Gastrocnemius medialis (tissue), 4 donors: ENCODE measurements at regions of chr11 and their contacts with region 1.

Region 1: GRCh38 chr11:82867495-82868082 is 32.6 kb downstream of the PRCP start:
- DNase-seq: peak; percentile 45 to 58
- ATAC-seq: peak in 1 of 2 donors; percentile 53
- H3K4me3 ChIP-seq: peak overlapping the region in 3 of 4 donors; percentile 3 to 35 (median 21)
- H3K27ac ChIP-seq: no peak overlapping the region
- H3K4me1 ChIP-seq: peaks cover 5 to 26% of the 10 kb centered on the region in 2 donors
- H3K27me3 ChIP-seq: no peaks in the 10 kb centered on the region
- CTCF ChIP-seq: peak; percentile 47 to 79 (median 69)
- POLR2A ChIP-seq: no peak

Region 2: DNA sequence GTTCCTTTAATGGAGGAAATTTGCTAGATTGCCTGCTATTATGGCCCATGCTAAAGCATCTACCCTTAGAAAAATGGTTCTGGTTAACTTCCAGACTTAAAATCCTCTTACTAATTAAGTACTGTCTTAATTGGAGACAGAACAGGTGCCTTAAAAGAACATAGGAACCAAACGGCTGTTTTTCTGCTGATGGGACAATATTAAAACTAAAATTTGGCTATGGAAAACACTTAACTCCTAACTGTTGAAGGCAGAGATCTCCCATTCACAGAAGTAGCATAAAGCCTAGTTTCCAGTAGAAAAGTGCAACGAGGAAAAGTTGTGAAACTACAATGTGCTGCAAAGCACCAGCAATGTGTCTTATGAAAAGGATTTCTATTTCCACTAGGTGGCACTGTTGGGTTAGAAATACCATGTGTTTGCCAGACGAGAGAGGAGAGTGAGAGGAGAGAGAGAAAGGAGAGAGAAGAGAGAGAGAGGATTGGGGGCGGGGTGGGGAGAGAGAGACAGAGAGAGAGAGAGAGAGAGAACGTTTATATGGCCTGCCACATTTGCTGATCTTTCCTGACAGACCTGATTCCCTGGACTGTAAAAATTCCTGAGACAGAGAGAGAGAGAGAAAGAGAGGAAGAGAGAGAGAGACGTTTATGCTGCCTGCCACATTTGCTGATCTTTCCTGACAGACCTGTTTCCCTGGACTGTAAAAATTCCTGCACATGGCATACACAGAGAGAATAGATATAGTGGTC is 185.4 kb before region 1 on chr11:
- in situ Hi-C with region 1: no loop called
- intact Hi-C with region 1: loop called (anchors 10 kb)
- DNase-seq: no peak
- ATAC-seq: peak; percentile 69 to 85
- H3K4me3 ChIP-seq: no peak overlapping the region
- H3K27ac ChIP-seq: no peak overlapping the region
- H3K4me1 ChIP-seq: no peaks in the 10 kb centered on the region
- H3K27me3 ChIP-seq: no peaks in the 10 kb centered on the region
- CTCF ChIP-seq: peak; percentile 22 to 56 (median 48)
- POLR2A ChIP-seq: no peak

Region 3: GRCh38 chr11:82718307-82718706 is 149.3 kb before region 1 on chr11:
- in situ Hi-C with region 1: loop called in 2 of 4 experiments (anchors 10 kb)
- intact Hi-C with region 1: loop called (anchors 1 kb)
- DNase-seq: no peak
- ATAC-seq: peak; percentile 61 to 75
- H3K4me3 ChIP-seq: no peak overlapping the region
- H3K27ac ChIP-seq: no peak overlapping the region
- H3K4me1 ChIP-seq: no peaks in the 10 kb centered on the region
- H3K27me3 ChIP-seq: no peaks in the 10 kb centered on the region
- CTCF ChIP-seq: peak; percentile 24 to 71 (median 54)
- POLR2A ChIP-seq: no peak

Region 4: GRCh38 chr11:82927254-82927880 is 59.8 kb after region 1 on chr11:
- in situ Hi-C with region 1: no loop called
- intact Hi-C with region 1: loop called (anchors 10 kb)
- DNase-seq: no peak
- ATAC-seq: peak in 1 of 2 donors; percentile 80
- H3K4me3 ChIP-seq: no peak overlapping the region
- H3K27ac ChIP-seq: no peak overlapping the region
- H3K4me1 ChIP-seq: no peaks in the 10 kb centered on the region
- H3K27me3 ChIP-seq: no peaks in the 10 kb centered on the region
- CTCF ChIP-seq: peak; percentile 56 to 81 (median 58)
- POLR2A ChIP-seq: no peak

Region 5: DNA sequence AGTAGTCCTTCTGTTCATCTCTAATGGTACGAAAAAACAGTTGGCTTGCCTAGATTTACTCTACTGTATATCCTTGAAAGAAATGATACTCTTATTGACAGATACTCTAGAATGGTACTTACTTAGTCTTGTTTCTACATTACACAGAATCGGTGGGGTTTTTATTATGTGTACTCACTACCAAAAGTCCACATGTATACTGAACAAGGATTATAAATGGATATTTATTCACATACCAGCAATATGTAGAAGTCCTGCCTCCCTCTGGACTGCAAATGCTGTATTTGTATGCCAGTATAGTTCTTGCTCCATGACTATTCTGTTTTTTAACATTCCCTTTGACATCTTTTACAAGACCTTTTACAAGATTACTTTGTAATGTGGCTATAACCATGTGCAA is 303.3 kb after region 1 on chr11:
- in situ Hi-C with region 1: no loop called
- intact Hi-C with region 1: no loop called
- DNase-seq: no peak
- ATAC-seq: no peak
- H3K4me3 ChIP-seq: peak overlapping the region in 3 of 4 donors; percentile 3 to 20 (median 4)
- H3K27ac ChIP-seq: no peak overlapping the region
- H3K4me1 ChIP-seq: peaks cover 43 to 50% of the 10 kb centered on the region in 2 donors
- H3K27me3 ChIP-seq: no peaks in the 10 kb centered on the region
- CTCF ChIP-seq: no peak
- POLR2A ChIP-seq: no peak

Region 6: GRCh38 chr11:83249972-83250593 is 382.5 kb after region 1 on chr11:
- in situ Hi-C with region 1: no loop called
- intact Hi-C with region 1: loop called (anchors 5 kb)
- DNase-seq: no peak
- ATAC-seq: peak in 1 of 2 donors; percentile 72
- H3K4me3 ChIP-seq: no peak overlapping the region
- H3K27ac ChIP-seq: no peak overlapping the region
- H3K4me1 ChIP-seq: no peaks in the 10 kb centered on the region
- H3K27me3 ChIP-seq: no peaks in the 10 kb centered on the region
- CTCF ChIP-seq: peak; percentile 45 to 69 (median 63)
- POLR2A ChIP-seq: no peak

Region 7: DNA sequence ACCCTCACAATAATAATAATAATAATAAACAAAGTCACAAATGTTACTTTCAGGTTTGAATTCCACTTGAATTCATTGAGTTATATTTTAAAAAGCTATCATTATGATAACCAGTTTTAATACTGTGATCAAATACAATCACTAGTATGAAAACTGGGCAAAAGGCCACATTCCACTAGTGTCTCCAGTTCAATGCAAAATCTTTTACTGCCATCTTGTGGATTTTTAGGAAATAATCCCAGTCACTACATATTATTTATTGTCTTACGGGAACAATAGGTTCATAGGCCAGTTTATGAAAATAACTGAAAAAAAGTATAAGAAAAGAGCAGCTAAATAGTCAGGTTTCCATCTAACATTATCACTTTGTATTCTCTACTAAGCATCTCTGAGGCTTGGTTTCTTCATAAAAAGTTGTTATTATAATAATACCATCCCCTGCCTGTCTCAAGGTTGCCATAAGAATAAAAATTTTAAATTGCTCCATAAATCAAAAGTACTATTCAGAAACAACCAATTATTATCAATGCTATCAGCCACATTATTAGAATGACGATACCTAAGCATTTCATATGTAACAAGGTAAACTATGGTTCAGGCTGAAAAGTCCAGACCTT is 952.5 kb after region 1 on chr11:
- in situ Hi-C with region 1: loop called in 2 of 4 experiments (anchors 10 to 25 kb)
- intact Hi-C with region 1: loop called (anchors 5 kb)
- DNase-seq: no peak
- ATAC-seq: peak in 1 of 2 donors; percentile 64
- H3K4me3 ChIP-seq: no peak overlapping the region
- H3K27ac ChIP-seq: no peak overlapping the region
- H3K4me1 ChIP-seq: no peaks in the 10 kb centered on the region
- H3K27me3 ChIP-seq: no peaks in the 10 kb centered on the region
- CTCF ChIP-seq: peak in 4 of 5 experiments; percentile 31 to 51 (median 41)
- POLR2A ChIP-seq: no peak

Region 8: DNA sequence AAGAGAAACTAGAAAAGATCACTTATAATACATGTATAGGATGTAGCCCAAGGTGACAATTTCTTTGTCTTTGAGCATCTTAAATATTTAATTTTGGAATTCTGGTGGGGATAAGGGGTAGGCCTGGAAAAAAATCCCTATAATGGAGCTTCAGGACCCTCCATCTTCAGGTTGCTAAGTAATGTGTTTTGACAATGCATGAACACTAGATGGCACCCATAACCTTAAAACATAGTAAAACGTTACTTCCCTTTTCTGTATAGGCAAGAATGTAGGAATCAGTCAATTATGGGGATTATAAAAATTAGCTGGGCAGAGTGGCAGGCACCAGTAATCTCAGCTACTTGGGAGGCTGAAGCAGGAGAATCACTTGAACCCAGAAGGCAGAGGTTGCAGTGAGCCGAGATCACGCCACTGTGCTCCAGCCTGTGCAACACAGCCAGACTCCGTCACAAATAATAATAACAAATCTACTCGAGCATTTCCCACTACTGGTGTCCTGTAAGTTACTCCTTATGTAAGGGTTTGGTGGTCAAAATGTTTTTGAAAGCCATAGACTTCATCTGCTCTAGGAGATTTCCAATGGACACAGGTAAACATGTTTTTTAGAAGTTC is 960.5 kb after region 1 on chr11:
- in situ Hi-C with region 1: loop called in 2 of 4 experiments (anchors 10 to 25 kb)
- intact Hi-C with region 1: no loop called
- DNase-seq: no peak
- ATAC-seq: peak in 1 of 2 donors; percentile 33
- H3K4me3 ChIP-seq: peak overlapping the region in 3 of 4 donors; percentile 15 to 25 (median 23)
- H3K27ac ChIP-seq: no peak overlapping the region
- H3K4me1 ChIP-seq: no peaks in the 10 kb centered on the region
- H3K27me3 ChIP-seq: no peaks in the 10 kb centered on the region
- CTCF ChIP-seq: peak in 3 of 5 experiments; percentile 4 to 34 (median 17)
- POLR2A ChIP-seq: no peak